ENCODE measurements at regions of chr17 and their contacts with region 1.

Region 1: GRCh38 chr17:55770148-55770870 is 19.5 kb downstream of the PCTP start:
- DNase-seq: peak; percentile 64 to 84
- ATAC-seq: peak; percentile 76 to 93; a peak in 5 of 6 replicates
- H3K4me3 ChIP-seq: no peak overlapping the region
- H3K27ac ChIP-seq: peak overlapping the region in 1 of 2 experiments; percentile 12; a peak in 1 of 6 replicates
- H3K4me1 ChIP-seq: peaks cover 9% of the 10 kb centered on the region
- CTCF ChIP-seq: peak; percentile 91
- EP300 ChIP-seq: no peak
- POLR2A ChIP-seq: no peak
- RAD21 ChIP-seq: peak; percentile 82 to 90

Region 2: DNA sequence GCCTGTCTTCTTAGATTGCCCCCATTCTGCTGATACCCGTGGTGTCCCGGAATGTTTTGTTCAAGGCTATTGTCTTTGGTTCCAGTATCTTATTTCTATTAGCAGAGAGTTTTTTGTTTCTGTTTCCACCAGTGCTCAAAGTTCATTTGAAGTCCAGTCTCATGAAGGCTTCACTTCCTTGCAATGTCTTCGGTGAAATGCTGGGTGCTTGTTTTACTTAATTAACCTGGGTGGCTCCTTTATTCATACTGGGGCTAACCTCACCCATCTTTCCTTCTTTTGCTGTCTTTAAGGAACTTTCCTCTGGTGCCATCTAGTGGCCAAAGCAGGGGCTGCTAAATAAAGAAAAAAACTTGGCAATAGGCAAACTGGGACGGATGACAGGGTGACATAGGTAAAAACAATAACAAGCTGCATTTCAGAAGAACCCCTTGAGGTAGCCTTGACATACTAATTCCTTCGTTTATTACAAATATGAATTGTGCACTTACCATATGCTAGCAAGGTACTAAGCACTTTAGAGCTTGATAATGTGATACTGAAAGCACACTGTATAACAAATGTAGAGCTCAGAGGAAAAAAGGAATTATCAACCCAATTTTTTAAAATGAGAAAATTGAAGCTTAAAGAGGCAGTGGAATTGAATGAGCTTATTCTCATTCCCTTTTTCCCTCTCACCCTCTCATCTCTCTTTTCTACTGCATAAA is 256.3 kb before region 1 on chr17:
- CTCF ChIA-PET with region 1: interaction called, 10 read pairs
- POLR2A ChIA-PET with region 1: no interaction called
- DNase-seq: peak; percentile 61 to 79
- ATAC-seq: peak; percentile 55 to 88
- H3K4me3 ChIP-seq: no peak overlapping the region
- H3K27ac ChIP-seq: peak overlapping the region; percentile 69 to 74
- H3K4me1 ChIP-seq: peaks cover 9% of the 10 kb centered on the region
- CTCF ChIP-seq: peak; percentile 98
- EP300 ChIP-seq: no peak
- POLR2A ChIP-seq: no peak
- RAD21 ChIP-seq: peak; percentile 98 to 99

Region 3: DNA sequence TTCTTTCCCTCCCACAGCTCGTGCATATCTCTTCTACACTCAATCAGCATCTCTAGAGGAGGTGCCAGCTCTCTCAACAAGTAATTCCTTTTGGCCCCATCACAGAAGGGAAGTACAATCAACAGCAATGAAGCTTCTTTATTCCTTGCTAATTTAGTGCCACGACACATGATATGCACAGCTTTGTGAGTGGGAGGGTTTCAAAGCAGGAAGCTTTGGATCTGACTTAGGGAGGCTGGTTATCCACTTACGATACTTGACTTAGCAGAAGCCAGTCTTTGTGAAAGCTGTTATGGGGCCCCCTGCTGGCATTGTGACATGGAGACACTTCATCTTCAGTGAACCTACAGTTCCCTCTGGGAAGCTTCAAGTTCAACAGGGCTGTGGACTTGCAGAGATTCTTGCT is 128.6 kb before region 1 on chr17:
- CTCF ChIA-PET with region 1: interaction called, 21 read pairs
- POLR2A ChIA-PET with region 1: no interaction called
- DNase-seq: peak; percentile 20 to 73
- ATAC-seq: peak; percentile 87 to 94
- H3K4me3 ChIP-seq: no peak overlapping the region
- H3K27ac ChIP-seq: no peak overlapping the region
- H3K4me1 ChIP-seq: no peaks in the 10 kb centered on the region
- CTCF ChIP-seq: peak; percentile 64
- EP300 ChIP-seq: no peak
- POLR2A ChIP-seq: no peak
- RAD21 ChIP-seq: peak; percentile 55 to 68

Region 4: DNA sequence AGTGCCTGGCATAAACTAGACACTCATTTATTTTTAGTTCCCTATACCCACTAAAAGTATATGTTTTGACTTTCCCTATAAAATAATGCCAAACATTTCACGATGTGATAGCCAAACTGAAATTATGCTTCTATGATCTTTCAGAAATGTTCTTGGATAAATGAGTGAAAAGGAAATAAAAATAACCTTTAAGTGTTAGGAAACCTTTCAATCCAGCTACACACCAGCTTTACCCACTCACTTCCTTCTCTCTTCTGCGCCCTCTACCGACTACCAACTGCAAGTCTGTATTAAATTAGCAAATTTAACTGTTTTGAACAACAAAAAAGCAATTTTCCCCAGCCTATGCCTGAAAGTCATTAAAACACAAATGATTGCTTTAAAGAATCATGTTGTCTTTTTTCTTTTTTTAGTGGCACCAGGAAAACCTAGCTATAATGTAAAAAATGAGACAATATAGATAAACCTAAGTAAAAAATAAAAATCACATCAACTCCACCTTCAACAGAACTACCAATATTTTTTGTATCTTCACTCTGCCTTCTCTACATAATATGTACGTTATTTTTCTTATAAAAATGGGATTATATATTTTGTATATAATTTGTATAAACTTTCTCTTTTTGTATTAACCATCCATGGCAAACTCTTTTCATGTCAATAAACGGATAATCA is 34.4 kb before region 1 on chr17:
- CTCF ChIA-PET with region 1: interaction called, 47 read pairs
- POLR2A ChIA-PET with region 1: no interaction called
- DNase-seq: peak; percentile 30 to 72
- ATAC-seq: peak; percentile 52 to 79; a peak in 3 of 6 replicates
- H3K4me3 ChIP-seq: no peak overlapping the region
- H3K27ac ChIP-seq: no peak overlapping the region
- H3K4me1 ChIP-seq: no peaks in the 10 kb centered on the region
- CTCF ChIP-seq: peak; percentile 86
- EP300 ChIP-seq: no peak
- POLR2A ChIP-seq: no peak
- RAD21 ChIP-seq: peak; percentile 56 to 58

Region 5: GRCh38 chr17:55783684-55784245 is 13.5 kb after region 1 on chr17:
- CTCF ChIA-PET with region 1: interaction called, 43 read pairs
- POLR2A ChIA-PET with region 1: no interaction called
- DNase-seq: no peak
- ATAC-seq: no peak
- H3K4me3 ChIP-seq: no peak overlapping the region
- H3K27ac ChIP-seq: no peak overlapping the region
- H3K4me1 ChIP-seq: no peaks in the 10 kb centered on the region
- CTCF ChIP-seq: no peak
- EP300 ChIP-seq: no peak
- POLR2A ChIP-seq: no peak
- RAD21 ChIP-seq: no peak